CD4-positive, alpha-beta T cell (primary cell): ENCODE measurements at regions of chr2 and their contacts with region 1.

Region 1: DNA sequence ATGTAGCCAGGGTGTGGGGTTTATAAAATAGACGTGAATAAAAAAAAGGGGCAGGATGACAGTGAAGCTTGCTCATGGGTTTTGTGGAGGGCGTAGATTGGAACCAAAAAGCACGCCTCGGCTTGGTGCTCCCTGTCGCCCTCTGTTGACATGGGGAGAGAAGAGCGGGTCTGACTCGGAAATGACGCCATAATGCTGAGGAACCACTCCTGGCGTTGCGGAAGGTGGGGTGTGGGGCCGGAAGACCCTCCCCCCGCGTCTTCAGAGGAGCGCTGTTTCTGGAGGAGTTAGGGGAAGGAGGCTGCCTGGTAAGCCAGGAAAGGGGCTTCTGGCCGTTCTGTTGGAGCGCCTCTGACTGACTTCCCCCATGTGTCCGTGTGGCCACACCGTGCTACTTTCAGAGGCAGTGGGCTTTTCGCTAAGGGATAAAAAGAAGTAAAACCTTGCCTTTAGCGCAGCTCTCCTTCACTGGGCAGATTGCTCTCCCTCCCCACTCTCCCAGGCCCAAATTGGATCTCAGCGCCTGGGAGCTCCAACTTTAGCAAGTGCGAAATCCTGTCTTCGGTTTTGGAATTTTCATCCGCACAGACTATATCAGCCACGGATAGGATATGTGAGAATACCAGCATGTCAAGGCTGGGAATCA is 42.8 kb downstream of the PLEKHA3 start:
- DNase-seq: peak; percentile 61 to 91 (median 73)
- ATAC-seq: peak; percentile 99
- H3K4me3 ChIP-seq: peak overlapping the region; percentile 74
- H3K4me3 Mint-ChIP-seq: peak overlapping the region; percentile 89
- H3K27ac ChIP-seq: peak overlapping the region; percentile 26 to 63
- H3K27ac Mint-ChIP-seq: peak overlapping the region; percentile 85
- H3K4me1 ChIP-seq: peaks cover 8% of the 10 kb centered on the region
- H3K4me1 Mint-ChIP-seq: peaks cover 44% of the 10 kb centered on the region
- H3K27me3 ChIP-seq: no peaks in the 10 kb centered on the region
- H3K27me3 Mint-ChIP-seq: no peaks in the 10 kb centered on the region
- CTCF ChIP-seq: peak; percentile 77

Region 2: DNA sequence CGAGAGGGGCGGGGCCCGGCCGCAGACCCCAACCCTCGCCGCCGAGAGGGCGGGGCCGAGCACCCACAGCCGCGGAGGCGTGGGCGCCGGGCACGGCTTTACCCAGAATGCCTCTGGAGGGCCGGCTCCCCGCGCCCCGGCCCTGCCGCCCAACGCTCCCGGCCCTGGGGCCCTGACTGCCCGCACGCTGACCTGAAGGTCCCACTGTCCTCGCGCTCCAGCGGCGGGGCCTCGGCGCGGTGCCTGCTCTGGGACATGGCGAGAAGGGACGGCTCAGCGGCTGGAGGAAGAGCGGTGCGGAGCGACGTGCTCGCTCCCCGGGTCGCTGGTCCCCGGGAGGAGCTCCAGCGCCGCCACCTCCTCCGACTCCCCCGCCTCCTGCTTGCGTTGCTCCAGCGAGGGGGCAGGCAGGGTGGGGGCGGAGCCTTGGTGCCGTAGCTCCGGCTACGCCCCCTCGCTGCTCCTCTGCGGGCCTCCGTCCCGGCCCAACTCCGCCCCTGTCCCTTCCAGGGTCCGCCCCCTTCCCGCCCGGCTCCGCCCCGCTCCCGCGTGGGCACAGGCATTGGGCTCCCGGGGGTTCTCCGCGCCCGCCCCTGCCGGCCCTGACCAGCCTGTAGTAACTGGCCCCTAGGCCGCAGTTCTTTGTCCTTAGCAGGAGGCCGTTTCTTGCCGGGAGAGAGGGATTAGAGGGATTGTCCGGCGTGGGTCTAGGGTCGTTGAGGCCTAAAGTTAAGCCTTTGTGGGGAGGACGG is 72.1 kb before region 1 on chr2 and contains the starts of genes PJVK and PRKRA:
- CTCF ChIA-PET with region 1: interaction called, 5 read pairs
- POLR2A ChIA-PET with region 1: interaction called, 4 read pairs
- intact Hi-C with region 1: loop called in 1 of 2 experiments (anchors 2 kb)
- DNase-seq: peak; percentile 90 to 98 (median 95)
- ATAC-seq: peak; percentile 84
- H3K4me3 ChIP-seq: peak within 1 kb of the TSS; percentile 77
- H3K4me3 Mint-ChIP-seq: peak within 1 kb of the TSS; percentile 91
- H3K27ac ChIP-seq: peak within 1 kb of the TSS; percentile 78 to 98
- H3K27ac Mint-ChIP-seq: peak within 1 kb of the TSS; percentile 97
- H3K4me1 ChIP-seq: peaks cover 27% of the 10 kb centered on the region
- H3K4me1 Mint-ChIP-seq: peaks cover 35% of the 10 kb centered on the region
- H3K27me3 ChIP-seq: no peaks in the 10 kb centered on the region
- H3K27me3 Mint-ChIP-seq: no peaks in the 10 kb centered on the region
- CTCF ChIP-seq: no peak
- total RNA-seq, gene PJVK: 3.8 to 4.2 TPM
- total RNA-seq, gene PRKRA: 118 to 120 TPM

Region 3: GRCh38 chr2:178478439-178479274 is 44.4 kb before region 1 on chr2 and contains the start of gene FKBP7:
- CTCF ChIA-PET with region 1: interaction called, 6 read pairs
- POLR2A ChIA-PET with region 1: interaction called, 4 read pairs
- intact Hi-C with region 1: loop called (anchors 2 to 5 kb)
- DNase-seq: peak; percentile 74 to 95 (median 82)
- ATAC-seq: peak; percentile 82
- H3K4me3 ChIP-seq: peak within 1 kb of the TSS; percentile 66
- H3K4me3 Mint-ChIP-seq: peak within 1 kb of the TSS; percentile 96
- H3K27ac ChIP-seq: peak within 1 kb of the TSS; percentile 76 to 83
- H3K27ac Mint-ChIP-seq: peak within 1 kb of the TSS; percentile 91
- H3K4me1 ChIP-seq: peaks cover 42% of the 10 kb centered on the region
- H3K4me1 Mint-ChIP-seq: peaks cover 46% of the 10 kb centered on the region
- H3K27me3 ChIP-seq: no peaks in the 10 kb centered on the region
- H3K27me3 Mint-ChIP-seq: no peaks in the 10 kb centered on the region
- CTCF ChIP-seq: peak; percentile 81
- total RNA-seq, gene FKBP7: 0.25 to 0.55 TPM

Region 4: DNA sequence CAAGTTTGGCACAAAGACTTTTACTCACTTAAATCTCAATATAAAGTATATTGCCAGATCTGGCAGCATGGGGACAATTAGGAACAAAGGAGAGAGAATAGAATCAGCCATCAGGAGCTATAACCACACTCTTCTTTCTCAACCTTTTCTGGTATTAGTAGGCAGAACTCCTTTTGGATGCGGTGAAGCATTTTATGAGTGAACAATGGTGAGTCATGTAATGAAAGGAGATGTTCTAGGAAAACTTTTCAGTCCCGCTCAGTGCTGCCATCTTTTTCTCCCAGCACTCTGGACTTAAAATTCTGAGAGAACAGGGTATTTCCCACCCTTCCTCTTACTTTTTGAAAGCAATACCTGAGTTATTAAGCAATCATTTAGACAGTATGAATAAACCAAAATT is 10.6 kb before region 1 on chr2:
- CTCF ChIA-PET with region 1: interaction called, 12 read pairs
- POLR2A ChIA-PET with region 1: no interaction called
- intact Hi-C with region 1: no loop called
- DNase-seq: no peak
- ATAC-seq: no peak
- H3K4me3 ChIP-seq: no peak overlapping the region
- H3K4me3 Mint-ChIP-seq: no peak overlapping the region
- H3K27ac ChIP-seq: no peak overlapping the region
- H3K27ac Mint-ChIP-seq: no peak overlapping the region
- H3K4me1 ChIP-seq: no peaks in the 10 kb centered on the region
- H3K4me1 Mint-ChIP-seq: peaks cover 17% of the 10 kb centered on the region
- H3K27me3 ChIP-seq: no peaks in the 10 kb centered on the region
- H3K27me3 Mint-ChIP-seq: no peaks in the 10 kb centered on the region
- CTCF ChIP-seq: no peak

Region 5: DNA sequence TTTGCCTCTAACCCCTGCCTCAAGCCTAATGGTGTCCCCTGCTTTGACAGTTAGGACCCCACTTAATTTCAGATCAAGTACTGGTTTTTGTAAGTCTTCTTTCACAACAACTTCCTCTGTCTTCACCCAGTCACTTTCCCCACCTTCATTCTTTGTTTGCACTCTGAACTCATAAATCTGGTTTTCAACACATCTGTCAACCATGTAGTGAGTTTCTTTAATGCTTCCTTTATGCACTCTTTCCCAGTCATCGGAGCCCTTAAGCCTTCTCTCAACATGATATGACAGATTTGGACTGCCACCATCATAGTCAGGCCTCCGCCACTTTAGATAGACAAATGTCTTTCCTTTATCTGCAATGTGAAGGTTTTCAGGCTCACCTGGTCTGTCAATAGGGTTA is 66.3 kb after region 1 on chr2:
- CTCF ChIA-PET with region 1: no interaction called
- POLR2A ChIA-PET with region 1: no interaction called
- intact Hi-C with region 1: no loop called
- DNase-seq: no peak
- ATAC-seq: no peak
- H3K4me3 ChIP-seq: no peak overlapping the region
- H3K4me3 Mint-ChIP-seq: no peak overlapping the region
- H3K27ac ChIP-seq: no peak overlapping the region
- H3K27ac Mint-ChIP-seq: no peak overlapping the region
- H3K4me1 ChIP-seq: no peaks in the 10 kb centered on the region
- H3K4me1 Mint-ChIP-seq: no peaks in the 10 kb centered on the region
- H3K27me3 ChIP-seq: no peaks in the 10 kb centered on the region
- H3K27me3 Mint-ChIP-seq: no peaks in the 10 kb centered on the region
- CTCF ChIP-seq: no peak

Region 6: DNA sequence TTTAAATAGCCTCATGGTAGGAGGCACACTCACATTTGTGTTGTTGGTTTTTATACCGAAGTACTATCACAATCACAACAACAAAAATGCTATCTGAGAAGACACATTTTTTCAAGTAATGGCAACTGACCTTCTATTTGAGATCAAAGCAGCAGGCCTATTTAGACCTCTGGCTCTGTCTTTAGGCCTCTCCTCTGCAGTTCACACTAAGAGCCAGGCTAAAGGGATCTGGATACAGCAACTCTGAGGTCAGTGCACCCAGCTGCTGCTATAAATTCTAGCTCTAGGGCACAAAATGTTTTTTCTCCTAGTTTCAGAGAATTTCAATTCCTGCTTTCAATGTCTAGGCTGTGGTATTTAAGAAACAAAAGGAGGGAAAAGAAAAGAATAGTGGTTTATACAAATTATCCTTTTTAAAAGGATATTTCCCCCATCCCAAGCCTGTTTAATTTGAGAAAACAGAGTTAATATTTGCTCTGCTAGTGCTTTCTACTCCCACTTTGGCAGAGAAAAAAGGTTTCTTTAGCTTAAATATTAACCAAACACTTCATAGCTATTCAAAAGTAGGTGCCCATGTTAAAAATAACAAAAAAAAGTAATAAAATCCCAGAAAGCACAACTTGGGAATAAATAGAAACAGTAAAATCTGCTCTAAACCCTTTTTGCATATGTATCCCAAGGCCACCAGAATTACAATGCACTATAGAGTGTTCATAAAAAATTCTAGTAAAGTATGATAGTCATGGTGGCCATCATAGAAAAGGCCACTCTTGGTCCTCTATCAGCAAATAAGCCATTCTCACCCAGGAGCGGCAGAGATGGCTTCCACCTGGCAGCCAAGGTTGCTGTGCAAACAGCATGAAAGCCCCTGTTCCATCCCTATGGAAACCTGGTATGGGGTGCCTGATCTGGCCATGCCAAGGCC is 1035.2 kb after region 1 on chr2:
- CTCF ChIA-PET with region 1: no interaction called
- POLR2A ChIA-PET with region 1: no interaction called
- intact Hi-C with region 1: no loop called
- DNase-seq: no peak
- ATAC-seq: no peak
- H3K4me3 ChIP-seq: no peak overlapping the region
- H3K4me3 Mint-ChIP-seq: no peak overlapping the region
- H3K27ac ChIP-seq: no peak overlapping the region
- H3K27ac Mint-ChIP-seq: no peak overlapping the region
- H3K4me1 ChIP-seq: no peaks in the 10 kb centered on the region
- H3K4me1 Mint-ChIP-seq: no peaks in the 10 kb centered on the region
- H3K27me3 ChIP-seq: no peaks in the 10 kb centered on the region
- H3K27me3 Mint-ChIP-seq: peaks cover 4% of the 10 kb centered on the region
- CTCF ChIP-seq: no peak